CD4-positive, alpha-beta T cell (primary cell): ENCODE measurements at regions of chr1 and their contacts with region 1.

Region 1: GRCh38 chr1:172357753-172358385 is 62.6 kb upstream of the C1orf105 start:
- DNase-seq: peak in 1 of 14 experiments; percentile 33
- ATAC-seq: peak; percentile 19
- H3K4me3 ChIP-seq: peak overlapping the region; percentile 4
- H3K4me3 Mint-ChIP-seq: peak overlapping the region; percentile 70
- H3K27ac ChIP-seq: peak overlapping the region; percentile 64 to 74
- H3K27ac Mint-ChIP-seq: peak overlapping the region; percentile 91
- H3K4me1 ChIP-seq: peaks cover 30% of the 10 kb centered on the region
- H3K4me1 Mint-ChIP-seq: peaks cover 28% of the 10 kb centered on the region
- H3K27me3 ChIP-seq: no peaks in the 10 kb centered on the region
- H3K27me3 Mint-ChIP-seq: no peaks in the 10 kb centered on the region
- CTCF ChIP-seq: no peak

Region 2: DNA sequence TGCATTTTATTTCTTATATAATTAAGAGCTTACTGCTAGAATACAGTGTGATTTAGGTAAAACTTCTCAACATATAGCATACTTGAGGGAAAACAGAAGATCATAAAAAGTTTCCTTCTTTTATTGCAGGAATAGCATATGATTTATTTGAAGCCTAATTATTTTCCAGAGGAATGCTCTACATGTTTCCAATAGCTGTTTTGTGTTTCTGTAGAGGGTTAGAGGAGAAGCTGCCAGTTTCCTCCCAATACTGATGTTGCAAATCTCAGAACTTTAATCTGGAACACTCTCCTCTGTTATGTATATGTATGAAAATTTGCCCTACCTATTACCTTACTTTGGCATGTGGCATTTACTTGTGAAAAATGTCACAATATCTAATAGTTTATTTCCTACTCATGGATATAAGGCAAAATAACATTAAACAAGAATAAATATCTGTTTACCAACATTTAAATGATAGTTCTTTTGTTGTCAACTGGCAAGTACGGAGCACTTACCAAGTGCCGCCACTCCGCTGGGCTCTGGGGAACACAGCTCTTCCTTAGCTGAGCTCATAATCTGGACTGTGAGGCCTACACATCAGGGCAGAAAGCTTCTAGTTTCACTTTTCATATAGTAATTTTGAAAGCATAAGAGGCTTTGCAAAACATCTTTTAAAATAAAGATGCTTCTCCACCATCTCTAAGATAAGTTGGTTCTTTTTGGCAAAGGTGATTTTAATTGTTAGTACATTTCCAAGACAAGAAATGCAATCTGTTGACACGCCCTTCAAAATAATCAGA is 177.2 kb before region 1 on chr1:
- CTCF ChIA-PET with region 1: no interaction called
- POLR2A ChIA-PET with region 1: interaction called, 24 read pairs
- intact Hi-C with region 1: no loop called
- DNase-seq: peak in 12 of 14 experiments; percentile 11 to 79 (median 30)
- ATAC-seq: peak; percentile 65
- H3K4me3 ChIP-seq: peak overlapping the region; percentile 41
- H3K4me3 Mint-ChIP-seq: peak overlapping the region; percentile 83
- H3K27ac ChIP-seq: peak overlapping the region; percentile 71 to 89
- H3K27ac Mint-ChIP-seq: peak overlapping the region; percentile 97
- H3K4me1 ChIP-seq: peaks cover 11% of the 10 kb centered on the region
- H3K4me1 Mint-ChIP-seq: peaks cover 49% of the 10 kb centered on the region
- H3K27me3 ChIP-seq: no peaks in the 10 kb centered on the region
- H3K27me3 Mint-ChIP-seq: no peaks in the 10 kb centered on the region
- CTCF ChIP-seq: no peak

Region 3: GRCh38 chr1:172203135-172203823 is 154.6 kb before region 1 on chr1:
- CTCF ChIA-PET with region 1: no interaction called
- POLR2A ChIA-PET with region 1: no interaction called
- intact Hi-C with region 1: no loop called
- DNase-seq: peak in 2 of 14 experiments; percentile 8 to 39
- ATAC-seq: no peak
- H3K4me3 ChIP-seq: no peak overlapping the region
- H3K4me3 Mint-ChIP-seq: peak overlapping the region; percentile 66
- H3K27ac ChIP-seq: no peak overlapping the region
- H3K27ac Mint-ChIP-seq: peak overlapping the region; percentile 71
- H3K4me1 ChIP-seq: no peaks in the 10 kb centered on the region
- H3K4me1 Mint-ChIP-seq: peaks cover 8% of the 10 kb centered on the region
- H3K27me3 ChIP-seq: no peaks in the 10 kb centered on the region
- H3K27me3 Mint-ChIP-seq: no peaks in the 10 kb centered on the region
- CTCF ChIP-seq: no peak

Region 4: GRCh38 chr1:172373864-172374263 is 16.0 kb after region 1 on chr1:
- CTCF ChIA-PET with region 1: interaction called, 4 read pairs
- POLR2A ChIA-PET with region 1: interaction called, 13 read pairs
- intact Hi-C with region 1: no loop called
- DNase-seq: no peak
- ATAC-seq: no peak
- H3K4me3 ChIP-seq: no peak overlapping the region
- H3K4me3 Mint-ChIP-seq: no peak overlapping the region
- H3K27ac ChIP-seq: no peak overlapping the region
- H3K27ac Mint-ChIP-seq: no peak overlapping the region
- H3K4me1 ChIP-seq: no peaks in the 10 kb centered on the region
- H3K4me1 Mint-ChIP-seq: peaks cover 21% of the 10 kb centered on the region
- H3K27me3 ChIP-seq: no peaks in the 10 kb centered on the region
- H3K27me3 Mint-ChIP-seq: no peaks in the 10 kb centered on the region
- CTCF ChIP-seq: no peak

Region 5: DNA sequence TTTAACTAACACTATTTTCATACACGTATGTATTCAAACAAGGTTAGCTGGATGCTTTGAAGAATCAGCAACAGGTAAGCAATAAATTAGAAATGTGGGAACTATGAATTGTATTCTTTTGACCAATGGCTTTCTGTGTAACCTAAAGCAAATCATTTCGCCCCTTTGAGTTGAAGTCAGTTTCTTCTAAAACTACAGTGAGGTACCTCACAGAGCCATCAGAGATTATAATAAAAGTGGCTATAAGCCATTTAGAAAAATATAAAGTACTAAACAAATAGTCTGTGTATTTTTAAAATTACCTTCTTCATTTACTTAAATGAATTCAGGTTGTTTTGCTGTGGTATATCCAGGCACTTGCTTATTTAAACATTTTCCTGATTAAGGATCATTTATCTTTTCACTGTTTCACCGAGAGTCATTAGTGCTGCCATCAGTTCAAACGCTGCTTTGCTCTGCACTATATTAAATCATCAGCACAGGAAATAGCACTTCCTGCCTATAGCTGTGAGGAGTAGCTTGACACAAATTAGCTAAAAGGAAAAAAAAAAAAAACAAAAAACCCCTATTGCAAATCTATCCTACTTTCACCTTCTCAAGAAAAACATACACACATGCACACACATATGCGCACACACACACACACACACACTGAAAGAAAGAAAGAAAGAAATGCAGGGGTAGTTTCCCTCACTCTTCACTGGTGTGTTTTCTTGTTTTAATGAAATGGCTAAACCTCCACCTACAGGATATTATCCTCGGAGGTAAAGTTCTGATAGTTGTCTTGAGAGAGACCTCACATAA is 22.8 kb after region 1 on chr1:
- CTCF ChIA-PET with region 1: interaction called, 10 read pairs
- POLR2A ChIA-PET with region 1: interaction called, 38 read pairs
- intact Hi-C with region 1: loop called in 1 of 2 experiments (anchors 1 kb)
- DNase-seq: peak in 8 of 14 experiments; percentile 9 to 84 (median 38)
- ATAC-seq: peak; percentile 96
- H3K4me3 ChIP-seq: peak overlapping the region; percentile 19
- H3K4me3 Mint-ChIP-seq: peak overlapping the region; percentile 65
- H3K27ac ChIP-seq: peak overlapping the region; percentile 62 to 77
- H3K27ac Mint-ChIP-seq: peak overlapping the region; percentile 88
- H3K4me1 ChIP-seq: no peaks in the 10 kb centered on the region
- H3K4me1 Mint-ChIP-seq: peaks cover 59% of the 10 kb centered on the region
- H3K27me3 ChIP-seq: no peaks in the 10 kb centered on the region
- H3K27me3 Mint-ChIP-seq: no peaks in the 10 kb centered on the region
- CTCF ChIP-seq: no peak

Region 6: GRCh38 chr1:172497230-172497629 is 139.4 kb after region 1 on chr1:
- CTCF ChIA-PET with region 1: no interaction called
- POLR2A ChIA-PET with region 1: no interaction called
- intact Hi-C with region 1: no loop called
- DNase-seq: no peak
- ATAC-seq: no peak
- H3K4me3 ChIP-seq: no peak overlapping the region
- H3K4me3 Mint-ChIP-seq: no peak overlapping the region
- H3K27ac ChIP-seq: no peak overlapping the region
- H3K27ac Mint-ChIP-seq: no peak overlapping the region
- H3K4me1 ChIP-seq: no peaks in the 10 kb centered on the region
- H3K4me1 Mint-ChIP-seq: no peaks in the 10 kb centered on the region
- H3K27me3 ChIP-seq: no peaks in the 10 kb centered on the region
- H3K27me3 Mint-ChIP-seq: no peaks in the 10 kb centered on the region
- CTCF ChIP-seq: no peak